Activated T-helper 2 cell treated with anti-CD3 and anti-CD28 coated beads, Interferon-gamma antibody, Interleukin-2, Interleukin-4, amounts not matched to agents 10 μg/mL and 5 μg/mL and 100 μg/mL, durations not matched to agents 14 hours and 24 hours and 36 hours (primary cell): ENCODE measurements at regions of chr21 and their contacts with region 1.

Region 1: DNA sequence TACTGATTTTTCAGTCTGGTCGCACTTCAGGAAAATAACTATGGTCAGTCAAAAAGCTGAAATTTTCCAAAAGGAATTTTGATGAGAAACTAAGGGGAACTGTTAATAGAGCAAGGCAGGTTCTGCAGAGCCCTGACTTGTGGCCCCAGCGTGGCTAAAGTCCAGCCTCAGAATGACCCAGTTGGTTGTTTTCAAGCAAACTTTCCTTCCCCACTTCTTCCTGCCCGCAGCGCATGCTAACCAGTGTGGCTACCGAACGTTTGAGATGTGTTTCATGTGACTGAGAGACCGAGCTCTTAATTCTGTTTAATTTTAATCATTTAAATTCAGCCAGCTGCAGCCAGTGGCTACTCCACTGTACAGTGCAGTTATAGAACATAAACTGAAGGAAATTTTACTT is 6.2 kb upstream of the IL10RB start:
- DNase-seq: no peak
- H3K4me3 Mint-ChIP-seq: no peak overlapping the region
- H3K27ac Mint-ChIP-seq: no peak overlapping the region
- H3K4me1 Mint-ChIP-seq: peaks cover 42% of the 10 kb centered on the region
- H3K27me3 Mint-ChIP-seq: no peaks in the 10 kb centered on the region

Region 2: GRCh38 chr21:33238565-33239255 is 21.3 kb before region 1 on chr21:
- intact Hi-C with region 1: loop called (anchors 2 kb)
- DNase-seq: no peak
- H3K4me3 Mint-ChIP-seq: peak overlapping the region; percentile 71
- H3K27ac Mint-ChIP-seq: peak overlapping the region; percentile 92
- H3K4me1 Mint-ChIP-seq: peaks cover 71% of the 10 kb centered on the region
- H3K27me3 Mint-ChIP-seq: no peaks in the 10 kb centered on the region

Region 3: GRCh38 chr21:33244082-33244778 is 15.8 kb before region 1 on chr21:
- intact Hi-C with region 1: loop called (anchors 1 kb)
- DNase-seq: no peak
- H3K4me3 Mint-ChIP-seq: peak overlapping the region; percentile 54
- H3K27ac Mint-ChIP-seq: peak overlapping the region; percentile 90
- H3K4me1 Mint-ChIP-seq: peaks cover 77% of the 10 kb centered on the region
- H3K27me3 Mint-ChIP-seq: no peaks in the 10 kb centered on the region

Region 4: GRCh38 chr21:33317145-33317544 is 57.1 kb after region 1 on chr21:
- intact Hi-C with region 1: no loop called
- DNase-seq: no peak
- H3K4me3 Mint-ChIP-seq: no peak overlapping the region
- H3K27ac Mint-ChIP-seq: no peak overlapping the region
- H3K4me1 Mint-ChIP-seq: no peaks in the 10 kb centered on the region
- H3K27me3 Mint-ChIP-seq: peaks cover 25% of the 10 kb centered on the region

Region 5: GRCh38 chr21:34004974-34005373 is 745.0 kb after region 1 on chr21:
- intact Hi-C with region 1: no loop called
- DNase-seq: no peak
- H3K4me3 Mint-ChIP-seq: no peak overlapping the region
- H3K27ac Mint-ChIP-seq: no peak overlapping the region
- H3K4me1 Mint-ChIP-seq: peaks cover 19% of the 10 kb centered on the region
- H3K27me3 Mint-ChIP-seq: no peaks in the 10 kb centered on the region